K562 (cell line): ENCODE measurements at regions of chr4 and their contacts with region 1.

Region 1: GRCh38 chr4:78644744-78645330 is 93.3 kb downstream of the ANXA3 start:
- DNase-seq: peak; percentile 69 to 87 (median 71)
- ATAC-seq: peak; percentile 91
- H3K4me3 ChIP-seq: no peak overlapping the region
- H3K27ac ChIP-seq: peak overlapping the region; percentile 79; the same call in 1 of the 3 replicates
- H3K4me1 ChIP-seq: peaks cover 31 to 52% of the 10 kb centered on the region in 2 experiments
- H3K27me3 ChIP-seq: no peaks in the 10 kb centered on the region
- CTCF ChIP-seq: peak; percentile 79 to 90 (median 88)
- EP300 ChIP-seq: no peak
- POLR2A ChIP-seq: no peak
- RAD21 ChIP-seq: peak; percentile 75 to 80

Region 2: DNA sequence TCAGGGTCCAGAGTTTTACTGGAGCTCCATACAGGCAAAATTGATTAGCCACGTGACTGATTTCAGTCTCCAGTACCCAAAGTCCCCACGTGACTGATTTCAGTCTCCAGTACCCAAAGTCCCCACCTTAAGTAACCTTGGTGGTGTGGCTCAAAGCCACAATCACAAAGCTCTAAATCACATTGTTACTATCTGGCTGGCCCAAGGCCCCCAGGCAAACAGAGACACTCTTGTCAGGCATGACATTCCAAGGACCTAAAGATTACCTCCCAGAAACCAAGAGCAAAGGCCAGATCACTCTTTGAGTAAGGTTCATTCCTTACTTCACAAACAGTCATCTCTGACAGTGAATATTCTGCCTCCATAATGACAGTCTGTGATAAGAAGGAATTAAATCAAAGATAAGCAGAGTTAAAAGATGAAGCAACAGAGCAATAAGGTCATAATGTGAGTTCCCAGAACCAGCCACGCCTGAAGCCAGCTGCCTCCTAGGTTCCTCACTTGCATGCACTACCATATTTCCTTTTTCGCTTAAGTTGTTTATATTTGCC is 14.8 kb before region 1 on chr4:
- CTCF ChIA-PET with region 1: no interaction called
- POLR2A ChIA-PET with region 1: interaction called, 11 read pairs
- in situ Hi-C with region 1: no loop called
- intact Hi-C with region 1: no loop called
- DNase-seq: peak; percentile 28 to 74 (median 35)
- ATAC-seq: peak; percentile 59
- H3K4me3 ChIP-seq: no peak overlapping the region
- H3K27ac ChIP-seq: peak overlapping the region; percentile 88
- H3K4me1 ChIP-seq: peaks cover 0 to 45% of the 10 kb centered on the region in 2 experiments; a peak in 4 of 5 replicates
- H3K27me3 ChIP-seq: no peaks in the 10 kb centered on the region
- CTCF ChIP-seq: no peak
- EP300 ChIP-seq: peak; percentile 66
- POLR2A ChIP-seq: no peak
- RAD21 ChIP-seq: peak in 1 of 2 experiments; percentile 6; a peak in 1 of 4 replicates

Region 3: DNA sequence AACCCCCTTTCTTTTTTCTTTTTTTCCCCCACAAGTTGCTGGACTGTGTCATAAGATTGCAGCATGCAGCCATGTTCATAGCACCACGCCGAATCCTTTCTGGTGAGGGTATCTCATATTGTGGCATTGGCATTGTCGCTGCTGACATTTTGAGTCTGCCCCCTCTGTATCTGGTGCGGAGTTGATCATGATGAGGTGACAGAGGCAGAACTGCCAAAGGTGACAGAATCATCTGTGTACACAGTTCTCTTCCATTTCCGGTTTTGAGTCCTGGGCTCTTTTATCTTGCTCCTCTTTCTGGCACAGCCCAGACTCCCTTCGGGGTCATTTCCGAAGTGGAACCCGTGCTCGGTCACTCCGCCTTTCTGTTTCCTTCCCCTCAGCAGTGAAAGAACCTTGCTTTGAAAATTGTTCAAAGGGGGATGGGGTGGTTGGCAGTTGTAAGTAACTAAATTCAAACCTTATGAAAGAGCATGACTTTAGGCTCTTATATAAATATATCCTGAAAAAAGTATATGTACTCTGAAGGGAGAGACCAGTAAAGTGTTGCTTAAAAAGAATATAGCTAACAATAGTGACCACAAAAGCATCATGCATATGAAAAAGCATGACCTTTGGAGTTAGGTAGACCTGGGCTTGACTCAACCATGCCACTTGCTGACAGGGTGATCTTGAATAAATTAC is 76.3 kb after region 1 on chr4:
- CTCF ChIA-PET with region 1: no interaction called
- POLR2A ChIA-PET with region 1: no interaction called
- in situ Hi-C with region 1: no loop called
- intact Hi-C with region 1: loop called (anchors 2 kb)
- DNase-seq: peak; percentile 30 to 93 (median 57)
- ATAC-seq: peak; percentile 96
- H3K4me3 ChIP-seq: peak overlapping the region; percentile 18; the same call in 1 of the 2 replicates
- H3K27ac ChIP-seq: peak overlapping the region; percentile 93
- H3K4me1 ChIP-seq: peaks cover 16 to 45% of the 10 kb centered on the region in 2 experiments
- H3K27me3 ChIP-seq: no peaks in the 10 kb centered on the region
- CTCF ChIP-seq: no peak
- EP300 ChIP-seq: peak; percentile 97
- POLR2A ChIP-seq: peak; percentile 72
- RAD21 ChIP-seq: peak in 1 of 2 experiments; percentile 35; a peak in 2 of 4 replicates

Region 4: GRCh38 chr4:78735697-78736096 is 90.9 kb after region 1 on chr4:
- CTCF ChIA-PET with region 1: no interaction called
- POLR2A ChIA-PET with region 1: no interaction called
- in situ Hi-C with region 1: no loop called
- intact Hi-C with region 1: loop called (anchors 5 kb)
- DNase-seq: no peak
- ATAC-seq: no peak
- H3K4me3 ChIP-seq: no peak overlapping the region
- H3K27ac ChIP-seq: no peak overlapping the region
- H3K4me1 ChIP-seq: peaks cover 22 to 67% of the 10 kb centered on the region in 2 experiments
- H3K27me3 ChIP-seq: no peaks in the 10 kb centered on the region
- CTCF ChIP-seq: no peak
- EP300 ChIP-seq: no peak
- POLR2A ChIP-seq: no peak
- RAD21 ChIP-seq: no peak

Region 5: GRCh38 chr4:78749972-78750727 is 105.3 kb after region 1 on chr4:
- CTCF ChIA-PET with region 1: no interaction called
- POLR2A ChIA-PET with region 1: no interaction called
- in situ Hi-C with region 1: no loop called
- intact Hi-C with region 1: no loop called
- DNase-seq: no peak
- ATAC-seq: no peak
- H3K4me3 ChIP-seq: no peak overlapping the region
- H3K27ac ChIP-seq: no peak overlapping the region
- H3K4me1 ChIP-seq: peaks cover 0 to 18% of the 10 kb centered on the region in 2 experiments; a peak in 3 of 5 replicates
- H3K27me3 ChIP-seq: no peaks in the 10 kb centered on the region
- CTCF ChIP-seq: no peak
- EP300 ChIP-seq: no peak
- POLR2A ChIP-seq: no peak
- RAD21 ChIP-seq: no peak

Region 6: DNA sequence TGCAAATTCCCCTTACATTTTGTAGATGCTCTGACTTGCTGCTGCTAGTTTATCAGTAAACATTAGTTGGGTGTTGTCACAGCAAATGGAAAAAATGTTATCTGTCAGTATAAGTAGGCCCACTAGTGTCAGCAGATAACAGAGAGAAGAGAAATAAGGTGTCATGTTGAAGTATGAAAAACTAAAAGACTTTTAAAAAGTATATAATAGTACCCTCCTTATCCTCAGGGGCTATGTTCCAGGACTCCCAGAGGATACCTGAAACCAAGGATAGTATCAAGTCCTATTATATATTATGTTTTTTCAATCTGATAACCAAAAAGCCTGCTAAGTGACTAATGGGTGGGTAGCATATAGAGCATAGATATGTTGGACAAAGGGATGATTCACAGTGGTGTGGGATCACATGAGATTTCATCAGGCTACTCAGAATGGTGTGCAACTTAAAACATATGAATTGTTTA is 119.7 kb after region 1 on chr4:
- CTCF ChIA-PET with region 1: no interaction called
- POLR2A ChIA-PET with region 1: no interaction called
- in situ Hi-C with region 1: no loop called
- intact Hi-C with region 1: no loop called
- DNase-seq: peak in 1 of 4 experiments; percentile 67
- ATAC-seq: peak; percentile 63
- H3K4me3 ChIP-seq: no peak overlapping the region
- H3K27ac ChIP-seq: peak overlapping the region; percentile 44
- H3K4me1 ChIP-seq: peaks cover 15 to 45% of the 10 kb centered on the region in 2 experiments; a peak in 4 of 5 replicates
- H3K27me3 ChIP-seq: no peaks in the 10 kb centered on the region
- CTCF ChIP-seq: no peak
- EP300 ChIP-seq: peak; percentile 59
- POLR2A ChIP-seq: no peak
- RAD21 ChIP-seq: peak in 1 of 2 experiments; percentile 30; a peak in 2 of 4 replicates

Region 7: DNA sequence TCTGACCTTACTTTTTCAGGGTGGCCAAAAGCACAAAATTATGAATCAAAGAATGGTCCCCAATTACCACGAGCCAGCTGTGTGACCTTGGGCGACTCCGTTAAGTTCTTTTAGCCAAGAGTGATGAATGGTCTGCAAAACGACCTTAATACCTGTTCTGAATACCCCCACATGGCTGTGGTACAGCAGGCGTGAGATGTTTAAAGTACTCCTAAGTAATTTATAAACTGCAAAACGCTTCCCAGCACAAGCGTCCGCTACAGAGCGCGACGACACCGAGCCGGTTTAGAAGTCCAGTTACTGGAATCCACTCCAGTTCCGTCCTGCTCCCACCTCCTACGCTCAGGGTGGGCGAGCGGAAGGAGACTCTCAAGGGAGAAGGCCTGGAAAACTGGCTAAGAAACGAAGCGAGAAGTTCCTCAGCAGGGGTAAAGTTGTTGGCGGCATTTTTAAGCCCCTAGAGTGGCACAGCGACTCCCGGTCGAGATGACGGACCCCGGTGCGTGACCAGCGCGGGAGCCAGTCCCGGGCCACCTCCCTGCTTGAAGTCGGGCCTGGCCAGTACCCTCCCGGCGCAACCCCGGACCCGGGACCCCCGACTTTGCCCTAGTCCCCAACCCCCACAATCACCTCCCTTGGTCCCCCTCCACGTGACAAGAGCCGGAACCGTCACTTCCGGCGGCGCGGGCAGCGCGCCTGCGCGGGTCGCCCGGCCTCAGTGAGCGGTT is 130.6 kb after region 1 on chr4:
- CTCF ChIA-PET with region 1: no interaction called
- POLR2A ChIA-PET with region 1: interaction called, 3 read pairs
- in situ Hi-C with region 1: no loop called
- intact Hi-C with region 1: loop called (anchors 2 kb)
- DNase-seq: peak in 3 of 4 experiments; percentile 89 to 92 (median 91)
- ATAC-seq: peak; percentile 42
- H3K4me3 ChIP-seq: peak overlapping the region; percentile 89
- H3K27ac ChIP-seq: peak overlapping the region; percentile 98
- H3K4me1 ChIP-seq: peaks cover 15 to 34% of the 10 kb centered on the region in 2 experiments
- H3K27me3 ChIP-seq: no peaks in the 10 kb centered on the region
- CTCF ChIP-seq: no peak
- EP300 ChIP-seq: peak; percentile 16; the same call in 1 of the 2 replicates
- POLR2A ChIP-seq: peak; percentile 76
- RAD21 ChIP-seq: no peak